ENCODE measurements at regions of chr15 and their contacts with region 1.

Region 1: GRCh38 chr15:40941528-40942336 is 11.5 kb upstream of the CHAC1 start:
- DNase-seq: peak; percentile 58 to 63
- ATAC-seq: peak; percentile 76 to 81
- H3K4me3 ChIP-seq: peak overlapping the region; percentile 61
- H3K27ac ChIP-seq: peak overlapping the region; percentile 89 to 94
- H3K4me1 ChIP-seq: peaks cover 18% of the 10 kb centered on the region
- CTCF ChIP-seq: peak; percentile 89
- EP300 ChIP-seq: no peak
- POLR2A ChIP-seq: no peak; the same call in 1 of the 2 replicates
- RAD21 ChIP-seq: peak; percentile 32 to 66; a peak in 4 of 5 replicates

Region 2: DNA sequence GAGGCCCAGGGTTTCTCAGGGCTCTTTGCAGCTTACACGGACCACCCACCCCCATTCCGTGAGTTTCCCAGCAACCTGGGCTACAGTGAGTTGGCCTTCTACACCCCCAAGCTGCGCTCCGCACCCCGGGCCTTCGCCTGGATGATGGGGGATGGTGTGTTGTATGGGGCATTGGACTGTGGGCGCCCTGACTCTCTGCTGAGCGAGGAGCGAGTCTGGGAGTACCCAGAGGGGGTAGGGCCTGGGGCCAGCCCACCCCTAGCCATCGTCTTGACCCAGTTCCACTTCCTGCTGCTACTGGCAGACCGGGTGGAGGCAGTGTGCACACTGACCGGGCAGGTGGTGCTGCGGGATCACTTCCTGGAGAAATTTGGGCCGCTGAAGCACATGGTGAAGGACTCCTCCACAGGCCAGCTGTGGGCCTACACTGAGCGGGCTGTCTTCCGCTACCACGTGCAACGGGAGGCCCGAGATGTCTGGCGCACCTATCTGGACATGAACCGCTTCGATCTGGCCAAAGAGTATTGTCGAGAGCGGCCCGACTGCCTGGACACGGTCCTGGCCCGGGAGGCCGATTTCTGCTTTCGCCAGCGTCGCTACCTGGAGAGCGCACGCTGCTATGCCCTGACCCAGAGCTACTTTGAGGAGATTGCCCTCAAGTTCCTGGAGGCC is 42.1 kb before region 1 on chr15:
- CTCF ChIA-PET with region 1: interaction called, 59 read pairs
- POLR2A ChIA-PET with region 1: no interaction called
- DNase-seq: no peak
- ATAC-seq: no peak
- H3K4me3 ChIP-seq: no peak overlapping the region
- H3K27ac ChIP-seq: no peak overlapping the region
- H3K4me1 ChIP-seq: peaks cover 9% of the 10 kb centered on the region; the same call in 2 of the 3 replicates
- CTCF ChIP-seq: no peak
- EP300 ChIP-seq: no peak
- POLR2A ChIP-seq: no peak
- RAD21 ChIP-seq: no peak

Region 3: GRCh38 chr15:40921949-40922607 is 19.7 kb before region 1 on chr15:
- CTCF ChIA-PET with region 1: interaction called, 12 read pairs
- POLR2A ChIA-PET with region 1: no interaction called
- DNase-seq: no peak
- ATAC-seq: no peak
- H3K4me3 ChIP-seq: no peak overlapping the region
- H3K27ac ChIP-seq: no peak overlapping the region
- H3K4me1 ChIP-seq: no peaks in the 10 kb centered on the region
- CTCF ChIP-seq: no peak
- EP300 ChIP-seq: no peak
- POLR2A ChIP-seq: no peak
- RAD21 ChIP-seq: no peak

Region 4: GRCh38 chr15:40960926-40961325 is 19.2 kb after region 1 on chr15:
- CTCF ChIA-PET with region 1: interaction called, 76 read pairs
- POLR2A ChIA-PET with region 1: no interaction called
- DNase-seq: peak in 1 of 2 experiments; percentile 39
- ATAC-seq: peak; percentile 52 to 65; a peak in 5 of 6 replicates
- H3K4me3 ChIP-seq: no peak overlapping the region
- H3K27ac ChIP-seq: peak overlapping the region in 1 of 2 experiments; percentile 62; a peak in 3 of 6 replicates
- H3K4me1 ChIP-seq: peaks cover 14% of the 10 kb centered on the region
- CTCF ChIP-seq: no peak
- EP300 ChIP-seq: no peak
- POLR2A ChIP-seq: no peak
- RAD21 ChIP-seq: no peak

Region 5: GRCh38 chr15:41006479-41006878 is 64.7 kb after region 1 on chr15:
- CTCF ChIA-PET with region 1: interaction called, 19 read pairs
- POLR2A ChIA-PET with region 1: no interaction called
- DNase-seq: no peak
- ATAC-seq: no peak
- H3K4me3 ChIP-seq: no peak overlapping the region
- H3K27ac ChIP-seq: no peak overlapping the region
- H3K4me1 ChIP-seq: peaks cover 16% of the 10 kb centered on the region
- CTCF ChIP-seq: no peak
- EP300 ChIP-seq: no peak
- POLR2A ChIP-seq: no peak
- RAD21 ChIP-seq: no peak

Region 6: DNA sequence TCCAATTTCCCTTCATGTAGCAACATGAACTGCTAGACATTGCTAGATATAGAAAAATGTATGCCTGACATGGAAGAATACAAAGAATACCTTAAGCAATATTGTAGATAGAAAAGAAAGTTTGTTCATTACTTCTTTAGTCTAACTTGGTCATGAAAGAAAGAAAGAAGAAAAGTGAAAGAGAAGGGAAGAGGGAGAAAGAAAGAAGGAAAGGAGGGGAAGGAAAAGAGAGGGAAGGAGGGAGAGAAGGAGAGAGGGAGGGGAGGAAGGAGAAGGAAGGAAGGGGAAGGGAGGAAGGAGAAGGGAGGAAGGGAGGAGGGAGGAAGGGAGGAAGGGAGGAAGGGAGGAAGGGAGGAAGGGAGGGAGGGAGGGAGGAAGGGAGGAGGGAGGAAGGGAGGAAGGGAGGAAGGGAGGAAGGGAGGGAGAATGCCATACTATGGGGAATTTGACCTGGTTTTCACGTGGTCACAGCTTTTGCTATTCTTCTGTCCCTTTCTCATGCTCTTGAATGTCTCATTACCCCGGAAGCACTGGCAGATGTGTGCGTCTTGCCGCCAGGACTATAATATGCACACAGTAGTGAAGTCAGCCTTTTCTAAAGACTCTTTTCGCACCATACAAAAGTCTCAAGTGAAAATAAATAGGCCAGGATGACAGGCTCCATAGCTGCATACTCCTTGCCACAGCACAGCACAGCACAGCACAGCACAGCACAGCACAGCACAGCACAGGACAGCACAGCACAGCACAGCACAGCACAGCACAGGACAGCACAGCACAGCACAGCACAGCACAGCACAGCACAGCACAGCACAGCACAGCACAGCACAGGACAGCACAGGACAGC is 89.7 kb after region 1 on chr15:
- CTCF ChIA-PET with region 1: interaction called, 65 read pairs
- POLR2A ChIA-PET with region 1: no interaction called
- DNase-seq: no peak
- ATAC-seq: peak; percentile 30 to 37; a peak in 1 of 6 replicates
- H3K4me3 ChIP-seq: no peak overlapping the region
- H3K27ac ChIP-seq: no peak overlapping the region
- H3K4me1 ChIP-seq: no peaks in the 10 kb centered on the region
- CTCF ChIP-seq: no peak
- EP300 ChIP-seq: no peak
- POLR2A ChIP-seq: no peak
- RAD21 ChIP-seq: no peak

Measured in A549 (cell line).